ENCODE measurements at regions of chr16 and their contacts with region 1.

Region 1: DNA sequence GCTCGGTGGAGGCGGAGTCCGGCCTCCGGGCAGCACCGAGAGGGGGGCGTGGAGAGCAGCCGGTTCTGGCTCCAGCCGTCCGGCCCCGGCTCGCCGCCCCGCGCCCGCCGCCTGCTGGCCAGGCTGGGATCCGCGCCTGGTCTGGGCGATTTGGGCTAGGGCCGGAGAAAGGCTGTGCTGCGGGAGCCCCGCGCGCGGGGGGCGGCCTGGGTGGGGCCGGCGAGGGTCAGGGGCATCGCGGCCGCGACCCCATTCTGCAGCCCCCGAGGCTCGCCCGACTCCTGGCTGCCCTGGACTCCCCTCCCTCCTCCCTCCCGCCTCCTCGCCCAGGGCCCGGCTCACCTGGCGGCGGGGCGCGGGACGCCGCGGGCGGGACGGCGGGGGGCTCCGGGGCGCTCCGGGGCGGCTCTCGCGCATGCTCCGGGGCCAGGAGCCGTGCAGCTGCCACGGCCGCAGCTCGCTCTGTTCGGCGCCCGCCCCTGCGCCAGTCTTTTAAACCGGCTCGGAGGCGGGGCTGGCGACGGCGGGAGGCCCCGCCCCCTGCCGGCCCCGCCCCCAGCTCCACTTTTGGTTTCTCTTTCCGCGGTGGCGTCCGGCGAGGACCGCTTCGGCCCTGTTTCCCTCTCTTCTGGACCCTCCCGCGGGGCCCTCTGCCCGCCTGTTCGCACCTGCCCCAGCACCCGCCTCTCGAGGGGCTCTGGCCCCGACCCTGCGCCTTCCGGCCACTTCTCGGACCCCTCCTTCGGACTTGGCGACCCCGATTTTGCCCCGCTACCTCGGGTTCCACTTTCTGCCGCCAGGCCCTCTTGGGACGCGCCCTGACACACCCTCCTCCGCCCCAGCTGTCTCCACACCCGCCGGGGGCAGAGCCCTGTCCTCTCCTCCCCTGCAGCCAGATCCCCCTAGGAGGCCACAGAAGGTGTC is at the start of gene SOCS1:
- DNase-seq: peak; percentile 92
- H3K4me3 Mint-ChIP-seq: peak within 1 kb of the TSS; percentile 94
- H3K27ac Mint-ChIP-seq: peak within 1 kb of the TSS; percentile 94
- H3K4me1 Mint-ChIP-seq: peaks cover 51% of the 10 kb centered on the region
- H3K27me3 Mint-ChIP-seq: peaks cover 12% of the 10 kb centered on the region
- total RNA-seq, gene SOCS1: 136 to 142 TPM

Region 2: GRCh38 chr16:10954903-10955302 is 301.1 kb before region 1 on chr16:
- CTCF ChIA-PET with region 1: interaction called, 15 read pairs
- POLR2A ChIA-PET with region 1: interaction called, 13 read pairs
- DNase-seq: no peak
- H3K4me3 Mint-ChIP-seq: no peak overlapping the region
- H3K27ac Mint-ChIP-seq: no peak overlapping the region
- H3K4me1 Mint-ChIP-seq: peaks cover 62% of the 10 kb centered on the region
- H3K27me3 Mint-ChIP-seq: no peaks in the 10 kb centered on the region

Region 3: DNA sequence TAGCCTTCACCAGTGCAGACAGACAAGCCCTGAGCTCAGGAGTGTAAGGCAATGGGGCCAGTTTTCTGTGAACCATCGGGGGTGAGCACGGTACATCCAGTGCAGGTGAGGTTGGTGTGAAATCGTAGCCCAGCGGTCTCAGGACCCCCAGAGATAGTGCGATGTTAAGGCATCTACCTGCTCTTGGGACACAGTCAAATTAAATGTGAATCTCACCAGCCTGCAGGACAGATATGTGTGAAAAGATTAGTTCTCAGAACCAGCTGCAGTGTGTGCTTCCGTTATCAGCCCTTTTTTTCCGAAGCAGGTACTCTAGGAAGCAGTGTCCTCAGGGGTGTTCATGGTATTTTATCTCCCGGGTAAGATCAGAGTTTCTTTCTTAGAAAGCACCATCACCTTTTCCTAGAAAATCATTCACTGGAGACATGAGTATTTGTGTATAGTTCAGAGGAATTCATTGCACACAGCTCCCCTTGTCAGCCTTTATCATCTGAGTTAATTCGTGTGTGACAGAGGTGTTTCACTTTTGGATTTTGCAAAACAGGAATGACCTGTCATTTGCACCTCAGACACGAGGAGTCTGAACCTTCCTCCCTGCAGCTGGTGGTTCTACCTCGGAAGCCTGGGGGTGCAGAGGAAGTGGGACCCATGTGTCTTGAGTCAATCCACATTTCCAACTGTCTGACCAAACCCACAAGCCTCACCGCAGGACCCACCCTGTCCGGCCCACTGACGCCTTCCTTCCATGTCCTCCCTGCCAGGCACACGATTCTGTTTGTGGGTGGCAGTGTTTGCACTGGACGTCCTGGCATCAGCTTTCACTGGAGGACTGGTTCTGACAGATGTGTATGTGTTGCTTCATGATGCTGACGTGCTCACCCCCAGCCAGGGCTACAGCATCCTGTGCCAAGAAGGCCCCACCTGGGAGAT is 203.9 kb before region 1 on chr16:
- CTCF ChIA-PET with region 1: interaction called, 19 read pairs
- POLR2A ChIA-PET with region 1: interaction called, 166 read pairs
- DNase-seq: peak; percentile 92
- H3K4me3 Mint-ChIP-seq: peak overlapping the region; percentile 51
- H3K27ac Mint-ChIP-seq: peak overlapping the region; percentile 97
- H3K4me1 Mint-ChIP-seq: peaks cover 95% of the 10 kb centered on the region
- H3K27me3 Mint-ChIP-seq: no peaks in the 10 kb centered on the region

Region 4: GRCh38 chr16:11105038-11105903 is 150.7 kb before region 1 on chr16:
- CTCF ChIA-PET with region 1: interaction called, 18 read pairs
- POLR2A ChIA-PET with region 1: interaction called, 91 read pairs
- DNase-seq: peak; percentile 67
- H3K4me3 Mint-ChIP-seq: peak overlapping the region; percentile 19
- H3K27ac Mint-ChIP-seq: peak overlapping the region; percentile 90
- H3K4me1 Mint-ChIP-seq: peaks cover 83% of the 10 kb centered on the region
- H3K27me3 Mint-ChIP-seq: no peaks in the 10 kb centered on the region

Region 5: DNA sequence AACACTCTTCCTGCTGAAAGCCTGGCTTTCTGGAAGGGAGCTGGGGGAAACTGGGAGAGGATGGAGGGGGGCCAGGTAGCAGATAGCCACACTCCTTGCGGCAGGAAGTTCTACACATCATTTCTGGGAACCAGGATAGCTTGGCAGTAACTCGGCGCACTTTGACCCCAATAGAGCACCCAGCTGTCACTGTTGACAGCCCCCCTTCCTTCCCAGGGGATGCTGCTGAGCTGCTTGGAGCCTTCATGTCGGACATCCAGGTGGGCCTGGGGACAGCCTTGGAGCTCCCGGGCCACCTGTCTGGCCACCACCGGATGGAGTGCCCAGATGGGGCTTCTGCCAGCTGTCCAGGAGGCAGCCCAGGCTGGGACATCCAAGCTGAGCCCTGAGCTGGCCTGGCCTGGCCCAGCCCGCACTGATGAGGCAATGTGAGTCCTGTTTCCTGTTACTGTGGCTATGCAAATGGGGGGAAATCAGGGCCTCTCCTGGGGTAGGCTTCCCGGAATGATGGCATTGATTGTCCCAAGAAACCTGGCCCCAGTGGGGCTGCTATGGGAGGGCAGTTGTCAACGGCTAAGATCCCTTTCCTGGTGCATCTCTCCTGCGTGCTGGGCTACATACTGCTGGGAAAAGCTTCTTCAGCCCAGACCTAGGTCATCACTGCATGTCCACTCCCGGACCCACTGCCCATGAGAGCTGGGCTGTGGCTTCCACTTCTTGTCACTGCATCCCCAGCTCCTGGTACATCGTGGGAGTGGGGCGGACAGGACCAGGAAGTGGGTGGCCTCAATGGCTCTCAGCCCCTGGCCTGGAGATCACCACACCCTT is 50.0 kb before region 1 on chr16:
- CTCF ChIA-PET with region 1: interaction called, 4 read pairs
- POLR2A ChIA-PET with region 1: interaction called, 15 read pairs
- DNase-seq: no peak
- H3K4me3 Mint-ChIP-seq: no peak overlapping the region
- H3K27ac Mint-ChIP-seq: peak overlapping the region; percentile 83
- H3K4me1 Mint-ChIP-seq: peaks cover 55% of the 10 kb centered on the region
- H3K27me3 Mint-ChIP-seq: no peaks in the 10 kb centered on the region

Region 6: GRCh38 chr16:11276143-11276895 is 20.3 kb after region 1 on chr16 and contains the start of gene PRM2:
- CTCF ChIA-PET with region 1: no interaction called
- POLR2A ChIA-PET with region 1: no interaction called
- DNase-seq: no peak
- H3K4me3 Mint-ChIP-seq: no peak within 1 kb of the TSS
- H3K27ac Mint-ChIP-seq: no peak within 1 kb of the TSS
- H3K4me1 Mint-ChIP-seq: no peaks in the 10 kb centered on the region
- H3K27me3 Mint-ChIP-seq: peaks cover 26% of the 10 kb centered on the region
- total RNA-seq, gene PRM2: not detected

Region 7: DNA sequence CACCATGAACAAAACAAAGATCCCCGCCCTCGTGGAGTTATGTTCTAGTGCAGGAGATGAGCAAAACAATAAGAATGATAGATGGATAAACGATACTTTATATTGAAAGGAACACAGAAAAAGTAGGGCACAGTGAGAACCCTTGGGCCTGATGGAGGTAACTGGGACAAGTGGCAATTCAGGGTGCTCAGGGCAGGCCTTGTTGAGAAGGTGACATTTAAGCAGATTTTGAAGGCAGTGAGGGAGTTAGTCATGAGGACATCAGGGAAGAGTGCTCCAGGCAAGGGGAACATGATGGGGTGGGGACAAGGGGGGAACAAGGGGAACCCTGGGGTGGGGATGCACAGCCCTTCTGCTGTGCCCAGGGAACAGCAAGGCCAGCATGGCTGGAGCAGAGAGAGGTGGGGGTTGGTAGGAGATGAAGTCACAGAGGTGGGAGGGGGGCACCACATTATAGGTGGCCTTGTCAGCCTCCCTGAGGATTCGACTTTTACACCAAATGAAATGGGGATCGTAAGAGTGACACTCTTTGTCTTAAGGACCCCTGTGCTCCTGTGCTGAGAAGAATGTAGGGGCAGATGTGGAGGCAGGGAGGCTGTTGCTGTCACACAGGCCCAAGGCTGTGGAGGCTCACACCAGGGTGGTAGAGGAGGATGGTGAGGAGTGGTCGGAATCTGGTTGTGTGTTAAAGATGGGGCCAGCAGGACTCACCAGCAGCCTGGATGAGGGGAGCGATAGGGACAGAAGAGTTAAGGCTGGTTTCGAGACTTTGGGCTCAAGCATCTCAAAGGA is 34.3 kb after region 1 on chr16:
- CTCF ChIA-PET with region 1: no interaction called
- POLR2A ChIA-PET with region 1: no interaction called
- DNase-seq: no peak
- H3K4me3 Mint-ChIP-seq: no peak overlapping the region
- H3K27ac Mint-ChIP-seq: no peak overlapping the region
- H3K4me1 Mint-ChIP-seq: peaks cover 8% of the 10 kb centered on the region
- H3K27me3 Mint-ChIP-seq: peaks cover 67% of the 10 kb centered on the region

Region 8: DNA sequence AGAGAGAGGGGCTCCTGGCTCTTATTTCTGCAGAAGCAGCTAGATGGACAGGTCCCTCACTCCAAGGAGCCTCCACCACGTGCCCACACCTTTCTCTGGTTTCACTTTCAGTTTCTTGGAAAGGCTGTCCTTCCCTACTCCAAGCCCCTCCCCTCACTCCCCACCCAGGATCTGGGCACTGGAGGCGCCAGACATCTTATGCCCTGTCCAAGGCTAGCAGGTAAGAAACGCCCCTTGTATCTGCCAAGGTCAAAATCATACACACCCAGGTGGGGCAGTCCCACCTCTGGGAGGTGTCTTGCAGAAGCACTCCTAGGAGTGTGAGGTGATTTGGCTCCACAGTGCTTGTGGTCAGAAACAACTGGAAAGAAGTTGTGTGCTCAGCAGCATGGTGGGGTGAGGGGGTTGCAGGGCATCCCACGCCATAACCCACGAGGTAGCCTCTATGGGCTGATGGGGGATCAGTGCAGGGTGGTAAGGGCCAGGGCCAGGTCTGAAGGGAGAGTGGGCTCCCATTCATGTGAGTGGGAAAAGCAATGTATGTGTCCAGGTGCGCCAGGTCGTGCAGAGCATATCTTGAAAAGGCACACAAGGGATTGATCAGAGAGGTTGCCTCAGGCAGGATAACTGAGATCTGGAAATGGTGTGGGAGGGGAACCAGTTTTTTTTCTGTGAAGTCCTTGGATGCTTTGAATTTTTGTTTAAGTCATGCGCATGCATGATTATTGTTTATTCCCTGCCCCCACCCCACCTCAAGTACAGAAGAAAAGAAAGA is 56.9 kb after region 1 on chr16:
- CTCF ChIA-PET with region 1: interaction called, 8 read pairs
- POLR2A ChIA-PET with region 1: interaction called, 27 read pairs
- DNase-seq: peak; percentile 55
- H3K4me3 Mint-ChIP-seq: peak overlapping the region; percentile 46
- H3K27ac Mint-ChIP-seq: peak overlapping the region; percentile 68
- H3K4me1 Mint-ChIP-seq: peaks cover 65% of the 10 kb centered on the region
- H3K27me3 Mint-ChIP-seq: no peaks in the 10 kb centered on the region

Region 9: GRCh38 chr16:11361701-11362451 is 105.9 kb after region 1 on chr16:
- CTCF ChIA-PET with region 1: interaction called, 44 read pairs
- POLR2A ChIA-PET with region 1: interaction called, 169 read pairs
- DNase-seq: peak; percentile 59
- H3K4me3 Mint-ChIP-seq: peak overlapping the region; percentile 46
- H3K27ac Mint-ChIP-seq: no peak overlapping the region
- H3K4me1 Mint-ChIP-seq: peaks cover 43% of the 10 kb centered on the region
- H3K27me3 Mint-ChIP-seq: peaks cover 54% of the 10 kb centered on the region

Measured in activated CD4-positive, alpha-beta memory T cell treated with anti-CD3 and anti-CD28 coated beads, Interleukin-2, amount 10 ng/mL, durations not matched to agents 7 days and 5 days (primary cell).